ENCODE measurements at regions of chr6 and their contacts with region 1.

Region 1: DNA sequence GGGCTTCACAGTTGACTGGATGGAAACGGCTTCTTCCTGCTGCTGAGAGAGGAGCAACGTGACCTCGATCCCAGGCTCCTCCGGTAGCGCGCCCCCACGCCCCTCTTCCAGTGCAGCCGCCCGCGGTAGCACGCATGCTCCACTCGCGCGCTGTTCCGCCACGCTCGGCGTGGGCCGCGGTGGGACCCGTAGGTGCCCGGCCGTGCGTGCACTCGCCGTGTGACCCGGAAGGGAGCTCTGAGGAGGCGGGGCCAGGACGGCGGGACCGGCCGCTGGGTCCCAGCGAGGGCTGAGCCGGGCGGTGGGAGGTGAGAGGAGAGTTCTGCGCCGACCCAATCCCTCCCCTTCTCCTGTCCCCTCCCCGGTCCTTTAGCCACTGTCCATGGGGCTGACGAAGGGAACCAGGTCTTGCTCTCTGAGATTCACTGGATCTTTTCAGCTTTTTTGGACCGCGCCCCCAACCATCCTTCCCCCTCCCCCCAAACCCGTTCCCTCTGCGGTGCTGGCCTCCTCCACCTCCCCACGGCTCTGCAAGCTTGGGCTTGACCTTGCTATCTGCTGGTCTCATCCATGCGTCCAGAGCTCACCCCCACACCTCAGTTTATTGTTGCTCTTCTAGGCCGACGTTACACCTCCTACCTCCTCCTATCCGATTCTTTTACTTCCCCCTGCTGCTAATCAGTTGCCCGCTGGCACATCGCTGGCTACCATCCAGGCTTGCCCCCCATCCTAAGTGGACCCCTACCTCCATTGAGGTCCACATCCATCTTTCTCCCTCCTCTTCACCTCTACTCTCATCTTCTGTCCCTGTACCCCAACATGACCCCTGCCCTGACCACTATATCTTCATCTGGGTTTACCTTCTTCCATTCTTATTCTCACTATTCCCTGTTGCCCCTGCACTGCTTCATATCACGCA is at the start of gene CUL9:
- DNase-seq: peak; percentile 88 to 94 (median 90)
- ATAC-seq: peak; percentile 88 to 99 (median 98)
- H3K4me3 ChIP-seq: peak within 1 kb of the TSS; percentile 47 to 94 (median 82)
- H3K27ac ChIP-seq: peak within 1 kb of the TSS; percentile 16 to 85 (median 70)
- H3K4me1 ChIP-seq: peaks cover 4 to 29% (median 17%) of the 10 kb centered on the region in 12 donors
- H3K27me3 ChIP-seq: no peaks in the 10 kb centered on the region
- CTCF ChIP-seq: no peak
- POLR2A ChIP-seq: peak in 1 of 2 donors; percentile 72
- total RNA-seq, gene CUL9: 6.5 to 22.3 (median 12.5) TPM

Region 2: GRCh38 chr6:43228951-43229802 is 47.0 kb after region 1 on chr6 and contains the start of gene DNPH1:
- intact Hi-C with region 1: loop called in 1 of 10 experiments (anchors 5 kb)
- DNase-seq: peak; percentile 73 to 89 (median 80)
- ATAC-seq: peak; percentile 63 to 97 (median 92)
- H3K4me3 ChIP-seq: peak within 1 kb of the TSS; percentile 39 to 79 (median 62)
- H3K27ac ChIP-seq: peak within 1 kb of the TSS in 8 of 12 donors; percentile 17 to 83 (median 53)
- H3K4me1 ChIP-seq: peaks cover 0 to 34% (median 0%) of the 10 kb centered on the region in 12 donors
- H3K27me3 ChIP-seq: no peaks in the 10 kb centered on the region
- CTCF ChIP-seq: peak; percentile 76 to 97 (median 91)
- POLR2A ChIP-seq: peak in 1 of 2 donors; percentile 38
- total RNA-seq, gene DNPH1: 18.9 to 63.7 (median 25.7) TPM

Region 3: DNA sequence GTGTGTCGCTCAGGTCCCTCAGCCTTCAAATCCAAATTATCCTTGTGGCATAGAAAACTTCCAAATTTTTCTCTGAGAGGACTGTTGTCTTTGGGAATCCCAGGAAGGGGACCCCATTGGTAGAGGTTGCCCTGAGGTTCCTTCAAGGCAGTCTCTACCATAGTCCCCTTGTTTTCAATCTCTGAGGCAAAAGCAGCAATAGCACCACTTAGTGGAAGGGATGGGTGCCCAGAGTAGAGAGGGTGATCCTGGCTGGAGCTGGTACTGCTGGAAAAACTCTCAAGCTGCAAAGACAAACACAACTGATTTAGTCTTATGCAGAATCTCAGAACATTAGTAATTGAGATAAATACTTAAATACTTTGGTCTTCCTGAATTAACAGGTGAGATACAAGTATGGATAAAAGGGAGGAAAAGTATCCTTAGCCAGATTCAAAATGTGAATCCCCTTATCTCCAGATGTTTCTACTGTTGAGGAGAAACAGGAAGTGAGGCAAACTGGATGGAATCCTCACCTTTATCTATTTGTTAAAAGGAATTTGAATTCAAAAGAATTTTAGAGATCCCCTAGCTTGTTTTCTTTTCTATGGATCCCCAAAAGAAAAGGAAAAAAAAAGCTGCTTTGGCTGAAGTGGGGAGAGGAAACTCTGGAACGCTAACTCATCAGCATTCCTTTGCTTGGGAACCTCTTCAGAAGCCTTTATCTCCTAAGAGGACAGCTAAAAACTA is 173.8 kb after region 1 on chr6:
- intact Hi-C with region 1: loop called in 1 of 10 experiments (anchors 10 kb)
- DNase-seq: no peak
- ATAC-seq: peak; percentile 71 to 91 (median 90)
- H3K4me3 ChIP-seq: no peak overlapping the region
- H3K27ac ChIP-seq: no peak overlapping the region
- H3K4me1 ChIP-seq: no peaks in the 10 kb centered on the region
- H3K27me3 ChIP-seq: no peaks in the 10 kb centered on the region
- CTCF ChIP-seq: peak in 11 of 12 donors; percentile 9 to 61 (median 44)
- POLR2A ChIP-seq: no peak